Dendritic cell treated with granulocyte-macrophage colony-stimulating factor and Interleukin-4, amounts not matched to agents 40 ng/mL and 50 ng/mL, for 4 days (primary cell): ENCODE measurements at regions of chr7 and their contacts with region 1.

Region 1: GRCh38 chr7:18495412-18496340 is at the start of gene HDAC9:
- H3K4me3 Mint-ChIP-seq: peak within 1 kb of the TSS; percentile 72
- H3K27ac Mint-ChIP-seq: peak within 1 kb of the TSS; percentile 68
- H3K4me1 Mint-ChIP-seq: peaks cover 32% of the 10 kb centered on the region
- H3K27me3 Mint-ChIP-seq: peaks cover 2% of the 10 kb centered on the region

Region 2: DNA sequence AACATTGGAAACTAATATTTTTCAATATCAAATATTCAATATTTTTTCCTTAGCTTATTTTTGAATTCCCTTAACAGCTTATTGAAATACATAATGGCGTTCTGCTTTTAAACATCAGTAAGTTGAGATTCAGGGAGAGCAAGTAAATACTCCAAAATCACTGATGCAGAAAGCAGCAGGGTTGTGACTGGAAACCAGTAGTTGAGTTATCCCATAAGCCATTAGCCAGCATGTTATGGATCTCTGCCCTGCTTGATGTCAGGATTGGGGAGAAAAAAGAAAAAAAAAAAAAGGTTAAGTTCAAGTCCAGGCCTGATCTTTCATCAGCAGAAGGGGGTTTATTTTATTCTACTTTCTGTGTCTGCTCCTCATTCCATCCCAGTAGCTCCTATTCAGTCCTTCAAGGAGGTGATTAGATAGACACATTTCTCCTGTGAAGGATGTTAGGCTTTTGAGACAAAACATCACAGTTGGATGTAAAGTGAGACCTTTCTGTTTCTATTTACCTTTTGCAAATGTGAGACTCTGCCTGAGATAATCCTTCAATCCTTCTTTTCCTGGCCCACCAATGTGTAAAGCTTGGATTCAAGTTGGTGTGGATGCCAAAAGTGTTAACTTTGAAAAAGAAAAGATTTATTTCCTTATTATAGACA is 111.1 kb before region 1 on chr7:
- intact Hi-C with region 1: loop called (anchors 10 kb)
- H3K4me3 Mint-ChIP-seq: no peak overlapping the region
- H3K27ac Mint-ChIP-seq: no peak overlapping the region
- H3K4me1 Mint-ChIP-seq: peaks cover 35% of the 10 kb centered on the region
- H3K27me3 Mint-ChIP-seq: no peaks in the 10 kb centered on the region

Region 3: DNA sequence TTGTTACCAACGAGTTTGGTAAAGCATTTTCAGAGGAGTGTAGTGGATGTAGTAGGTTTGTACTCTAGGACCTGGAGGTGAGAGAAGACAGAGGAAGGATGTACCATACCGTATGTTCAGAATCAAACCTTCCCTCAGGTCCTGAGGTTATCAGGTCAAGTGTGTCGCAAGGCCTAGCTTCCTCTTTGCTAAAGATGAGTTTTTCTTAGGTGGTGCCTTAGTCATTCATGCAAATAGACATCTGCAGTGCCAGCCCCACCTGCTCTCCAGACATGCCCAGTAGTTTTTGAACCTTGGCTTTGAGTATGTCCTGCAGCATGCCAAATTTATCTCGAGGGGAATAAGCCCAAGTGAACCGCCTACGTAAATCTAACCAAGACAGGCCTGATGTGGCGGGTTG is 71.2 kb after region 1 on chr7:
- intact Hi-C with region 1: no loop called
- H3K4me3 Mint-ChIP-seq: no peak overlapping the region
- H3K27ac Mint-ChIP-seq: no peak overlapping the region
- H3K4me1 Mint-ChIP-seq: no peaks in the 10 kb centered on the region
- H3K27me3 Mint-ChIP-seq: no peaks in the 10 kb centered on the region

Region 4: GRCh38 chr7:18685971-18686370 is 190.3 kb after region 1 on chr7:
- intact Hi-C with region 1: no loop called
- H3K4me3 Mint-ChIP-seq: no peak overlapping the region
- H3K27ac Mint-ChIP-seq: no peak overlapping the region
- H3K4me1 Mint-ChIP-seq: peaks cover under 1% of the 10 kb centered on the region
- H3K27me3 Mint-ChIP-seq: no peaks in the 10 kb centered on the region